Endothelial cell of umbilical vein (primary cell): ENCODE measurements at regions of chr9 and their contacts with region 1.

Region 1: DNA sequence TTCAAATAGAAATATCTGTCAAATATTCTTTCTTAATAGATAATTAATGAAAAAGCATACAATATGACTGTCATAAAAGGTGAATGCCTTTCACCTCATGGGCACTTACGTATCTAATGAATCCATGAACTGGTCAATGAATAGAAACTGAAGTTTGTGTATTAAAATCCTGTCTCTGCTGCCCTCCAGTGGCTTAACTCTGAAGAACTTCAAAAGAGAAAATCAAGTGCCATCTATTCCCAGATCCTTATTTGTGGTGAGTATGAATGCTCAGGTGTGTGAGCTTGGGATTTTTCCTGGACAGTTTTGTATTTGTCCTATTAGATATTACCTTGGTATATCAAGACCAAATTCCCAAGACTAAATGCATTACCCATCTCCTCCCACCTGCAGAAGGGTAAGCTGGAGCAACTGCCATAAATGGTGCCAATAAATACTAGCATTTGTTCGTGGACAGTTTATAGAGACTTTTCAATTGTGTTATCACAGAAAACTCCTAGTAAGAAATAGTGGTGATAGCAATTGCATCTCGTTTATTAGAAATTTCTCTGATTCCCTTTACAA is 44.0 kb upstream of the SVEP1 start:
- DNase-seq: peak; percentile 75
- H3K4me3 ChIP-seq: no peak overlapping the region
- H3K27ac ChIP-seq: no peak overlapping the region
- H3K4me1 ChIP-seq: no peaks in the 10 kb centered on the region
- H3K27me3 ChIP-seq: no peaks in the 10 kb centered on the region
- CTCF ChIP-seq: peak; percentile 41 to 46
- POLR2A ChIP-seq: no peak

Region 2: DNA sequence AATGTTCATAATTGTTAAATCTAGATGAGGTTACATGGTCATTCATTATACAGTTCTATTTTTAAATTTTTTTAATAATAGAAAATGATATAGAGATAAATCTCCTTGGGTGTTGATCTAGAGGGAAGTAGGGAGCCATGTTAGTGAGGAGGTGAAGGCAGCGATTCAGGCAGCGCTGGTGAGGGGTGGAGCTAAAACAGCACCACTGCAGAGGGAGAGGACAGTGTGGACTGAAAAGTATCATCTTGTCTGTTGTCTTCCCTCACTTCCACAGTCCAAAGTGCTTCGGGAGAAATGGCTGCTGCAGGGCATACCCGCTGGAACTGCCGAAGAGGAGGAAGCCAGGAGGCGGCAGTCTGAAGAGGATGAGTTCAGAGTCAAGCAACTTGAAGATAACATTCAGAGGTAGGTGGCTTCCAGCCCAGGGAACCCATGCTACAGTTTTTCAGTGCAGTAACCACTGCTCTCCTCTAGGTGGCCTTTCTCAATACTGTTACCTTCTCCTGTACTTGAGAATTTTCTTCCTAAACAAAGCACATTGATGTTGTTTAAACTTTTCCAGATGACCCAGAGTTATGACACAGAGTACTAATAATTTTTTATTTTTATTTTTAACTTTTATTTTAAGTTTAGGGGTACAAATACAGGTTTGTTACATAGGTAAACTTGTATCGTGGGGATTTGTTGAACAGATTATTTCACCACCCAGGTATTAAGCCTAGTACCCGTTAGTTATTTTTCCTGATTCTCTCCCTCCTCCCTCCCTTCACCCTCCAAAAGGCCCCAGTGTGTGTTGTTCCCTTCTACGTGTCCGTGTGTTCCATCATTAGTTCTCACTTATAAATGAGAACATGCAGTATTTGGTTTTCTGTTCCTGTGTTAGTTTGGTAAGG is 743.0 kb before region 1 on chr9:
- CTCF ChIA-PET with region 1: no interaction called
- POLR2A ChIA-PET with region 1: no interaction called
- dilution Hi-C with region 1: no loop called
- intact Hi-C with region 1: loop called (anchors 10 kb)
- DNase-seq: peak; percentile 49
- H3K4me3 ChIP-seq: no peak overlapping the region
- H3K27ac ChIP-seq: no peak overlapping the region
- H3K4me1 ChIP-seq: no peaks in the 10 kb centered on the region
- H3K27me3 ChIP-seq: peaks cover 4 to 10% of the 10 kb centered on the region in 2 experiments
- CTCF ChIP-seq: peak; percentile 55 to 74
- POLR2A ChIP-seq: no peak

Region 3: GRCh38 chr9:110256380-110257096 is 367.0 kb before region 1 on chr9 and contains the start of gene TXN:
- CTCF ChIA-PET with region 1: interaction called, 10 read pairs
- POLR2A ChIA-PET with region 1: no interaction called
- dilution Hi-C with region 1: no loop called
- intact Hi-C with region 1: loop called (anchors 5 kb)
- DNase-seq: peak; percentile 85
- H3K4me3 ChIP-seq: peak within 1 kb of the TSS; percentile 40 to 93 (median 77)
- H3K27ac ChIP-seq: peak within 1 kb of the TSS; percentile 67
- H3K4me1 ChIP-seq: peaks cover 23% of the 10 kb centered on the region
- H3K27me3 ChIP-seq: no peaks in the 10 kb centered on the region
- CTCF ChIP-seq: no peak
- POLR2A ChIP-seq: peak; percentile 96
- total RNA-seq, gene TXN: 280 and 286 TPM in 2 replicates

Region 4: DNA sequence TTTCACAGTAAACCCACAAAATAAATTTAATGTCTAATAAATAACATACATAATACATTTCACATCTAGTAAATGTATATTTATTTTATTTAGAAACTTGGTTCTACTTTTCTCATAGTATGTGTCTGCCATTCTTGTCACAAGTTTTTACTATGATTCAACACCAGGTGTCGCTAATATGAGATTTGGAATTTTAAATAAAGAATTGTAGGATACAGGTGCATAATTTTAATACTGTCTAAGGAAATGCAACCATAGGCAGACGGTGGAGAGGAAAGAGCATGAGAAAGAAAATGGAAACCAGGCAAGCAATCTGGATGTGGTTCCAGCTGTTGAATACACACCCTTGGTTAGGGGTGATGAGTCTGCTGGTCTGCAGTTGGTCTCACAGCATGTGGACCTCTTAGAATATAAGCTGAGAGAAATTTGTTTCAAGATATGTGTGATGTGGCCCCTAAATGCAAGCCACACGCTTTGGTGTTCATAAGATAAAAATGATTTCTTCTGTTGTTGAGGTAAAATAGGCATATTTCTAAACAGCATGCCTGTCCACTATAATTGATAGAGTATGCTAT is 171.2 kb before region 1 on chr9:
- CTCF ChIA-PET with region 1: interaction called, 63 read pairs
- POLR2A ChIA-PET with region 1: no interaction called
- dilution Hi-C with region 1: no loop called
- intact Hi-C with region 1: loop called (anchors 1 kb)
- DNase-seq: peak; percentile 20
- H3K4me3 ChIP-seq: no peak overlapping the region
- H3K27ac ChIP-seq: no peak overlapping the region
- H3K4me1 ChIP-seq: no peaks in the 10 kb centered on the region
- H3K27me3 ChIP-seq: no peaks in the 10 kb centered on the region
- CTCF ChIP-seq: peak in 1 of 2 donors; percentile 10
- POLR2A ChIP-seq: no peak

Region 5: GRCh38 chr9:111305914-111306313 is 682.4 kb after region 1 on chr9:
- CTCF ChIA-PET with region 1: interaction called, 10 read pairs
- POLR2A ChIA-PET with region 1: no interaction called
- dilution Hi-C with region 1: no loop called
- intact Hi-C with region 1: no loop called
- DNase-seq: no peak
- H3K4me3 ChIP-seq: no peak overlapping the region
- H3K27ac ChIP-seq: no peak overlapping the region
- H3K4me1 ChIP-seq: no peaks in the 10 kb centered on the region
- H3K27me3 ChIP-seq: peaks cover 0 to 4% of the 10 kb centered on the region in 2 experiments
- CTCF ChIP-seq: no peak
- POLR2A ChIP-seq: no peak